ENCODE measurements at regions of chr4 and their contacts with region 1.

Region 1: GRCh38 chr4:69224891-69225290 is 10.3 kb upstream of the UGT2B11 start:
- DNase-seq: no peak
- H3K4me3 Mint-ChIP-seq: no peak overlapping the region
- H3K27ac Mint-ChIP-seq: no peak overlapping the region
- H3K4me1 Mint-ChIP-seq: no peaks in the 10 kb centered on the region
- H3K27me3 Mint-ChIP-seq: no peaks in the 10 kb centered on the region

Region 2: GRCh38 chr4:68780232-68780631 is 444.7 kb before region 1 on chr4:
- CTCF ChIA-PET with region 1: no interaction called
- intact Hi-C with region 1: no loop called
- DNase-seq: no peak
- H3K4me3 Mint-ChIP-seq: no peak overlapping the region
- H3K27ac Mint-ChIP-seq: no peak overlapping the region
- H3K4me1 Mint-ChIP-seq: no peaks in the 10 kb centered on the region
- H3K27me3 Mint-ChIP-seq: no peaks in the 10 kb centered on the region

Region 3: DNA sequence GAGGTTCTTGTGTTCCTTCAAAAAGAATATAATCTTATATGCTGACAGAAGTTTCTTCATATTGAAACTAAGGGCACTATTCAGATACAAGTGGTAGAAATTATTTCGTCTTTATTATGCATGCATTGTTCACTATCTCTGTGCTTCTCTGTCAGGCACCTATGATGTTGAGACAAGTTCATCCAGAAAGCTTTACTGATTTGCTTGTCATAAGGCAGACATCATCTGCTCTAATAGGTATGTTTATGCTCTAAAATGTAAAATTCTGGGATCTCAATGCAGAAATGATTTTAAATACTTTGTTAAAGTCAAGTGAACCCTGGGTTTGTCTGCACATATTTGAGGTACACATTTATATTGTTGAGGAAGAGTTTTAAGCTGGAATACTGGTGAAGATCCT is 14.0 kb before region 1 on chr4:
- CTCF ChIA-PET with region 1: no interaction called
- intact Hi-C with region 1: no loop called
- DNase-seq: no peak
- H3K4me3 Mint-ChIP-seq: no peak overlapping the region
- H3K27ac Mint-ChIP-seq: no peak overlapping the region
- H3K4me1 Mint-ChIP-seq: no peaks in the 10 kb centered on the region
- H3K27me3 Mint-ChIP-seq: no peaks in the 10 kb centered on the region

Region 4: DNA sequence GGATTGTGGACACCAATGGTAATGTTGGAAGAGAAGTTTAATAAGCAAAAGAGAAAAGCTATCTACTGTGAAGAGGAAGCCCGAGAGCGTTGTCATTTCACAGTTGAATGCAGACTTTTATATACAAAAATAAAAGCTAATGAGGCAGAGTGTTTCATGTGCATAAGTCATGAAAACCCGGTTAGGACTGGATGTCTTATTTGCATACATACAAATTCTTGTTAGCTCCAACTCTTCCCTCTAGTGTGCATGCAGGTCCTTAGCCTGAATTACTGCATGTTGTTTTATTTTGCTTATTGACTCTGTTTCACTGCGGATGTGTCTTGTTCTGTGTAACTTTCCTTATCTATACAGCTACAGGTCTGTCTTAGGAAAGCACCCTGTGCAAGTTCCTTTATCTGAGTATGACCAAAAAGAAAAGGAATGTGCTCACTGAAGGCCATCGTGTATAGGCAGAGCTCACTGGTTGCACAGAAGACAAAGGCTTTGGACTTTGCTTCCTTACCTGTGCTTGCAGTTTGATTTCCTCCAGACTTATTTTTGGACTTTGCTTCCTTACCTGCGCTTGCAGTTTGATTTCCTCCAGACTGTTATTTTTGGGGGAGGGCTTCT is 14.8 kb after region 1 on chr4:
- CTCF ChIA-PET with region 1: no interaction called
- intact Hi-C with region 1: no loop called
- DNase-seq: no peak
- H3K4me3 Mint-ChIP-seq: no peak overlapping the region
- H3K27ac Mint-ChIP-seq: no peak overlapping the region
- H3K4me1 Mint-ChIP-seq: no peaks in the 10 kb centered on the region
- H3K27me3 Mint-ChIP-seq: no peaks in the 10 kb centered on the region

Region 5: DNA sequence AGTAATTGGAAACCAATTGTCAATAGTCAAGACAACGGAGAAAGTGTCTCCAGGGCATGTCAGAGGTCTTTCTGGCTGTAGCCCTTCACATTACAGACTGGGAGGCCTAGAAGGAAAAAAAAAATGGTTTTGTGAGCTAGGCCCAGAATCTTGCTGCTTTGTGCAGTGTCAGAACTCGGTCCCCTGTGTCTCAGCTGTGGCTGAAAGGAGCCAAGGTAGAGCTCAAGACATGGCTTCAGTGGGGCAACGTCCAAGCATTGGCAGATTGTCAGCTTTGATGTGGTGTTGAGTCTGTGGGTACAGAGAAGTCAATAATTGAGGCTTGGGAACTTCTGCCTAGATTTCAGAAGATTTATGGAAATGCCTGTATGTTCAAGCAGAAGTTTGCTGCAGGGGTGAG is 158.4 kb after region 1 on chr4:
- CTCF ChIA-PET with region 1: no interaction called
- intact Hi-C with region 1: loop called (anchors 2 kb)
- DNase-seq: no peak
- H3K4me3 Mint-ChIP-seq: no peak overlapping the region
- H3K27ac Mint-ChIP-seq: no peak overlapping the region
- H3K4me1 Mint-ChIP-seq: no peaks in the 10 kb centered on the region
- H3K27me3 Mint-ChIP-seq: no peaks in the 10 kb centered on the region

Measured in activated naive CD4-positive, alpha-beta T cell treated with anti-CD3 and anti-CD28 coated beads for 36 hours (primary cell).